Right ventricle myocardium superior (tissue), 1 donor: ENCODE measurements at regions of chr17 and their contacts with region 1.

Region 1: DNA sequence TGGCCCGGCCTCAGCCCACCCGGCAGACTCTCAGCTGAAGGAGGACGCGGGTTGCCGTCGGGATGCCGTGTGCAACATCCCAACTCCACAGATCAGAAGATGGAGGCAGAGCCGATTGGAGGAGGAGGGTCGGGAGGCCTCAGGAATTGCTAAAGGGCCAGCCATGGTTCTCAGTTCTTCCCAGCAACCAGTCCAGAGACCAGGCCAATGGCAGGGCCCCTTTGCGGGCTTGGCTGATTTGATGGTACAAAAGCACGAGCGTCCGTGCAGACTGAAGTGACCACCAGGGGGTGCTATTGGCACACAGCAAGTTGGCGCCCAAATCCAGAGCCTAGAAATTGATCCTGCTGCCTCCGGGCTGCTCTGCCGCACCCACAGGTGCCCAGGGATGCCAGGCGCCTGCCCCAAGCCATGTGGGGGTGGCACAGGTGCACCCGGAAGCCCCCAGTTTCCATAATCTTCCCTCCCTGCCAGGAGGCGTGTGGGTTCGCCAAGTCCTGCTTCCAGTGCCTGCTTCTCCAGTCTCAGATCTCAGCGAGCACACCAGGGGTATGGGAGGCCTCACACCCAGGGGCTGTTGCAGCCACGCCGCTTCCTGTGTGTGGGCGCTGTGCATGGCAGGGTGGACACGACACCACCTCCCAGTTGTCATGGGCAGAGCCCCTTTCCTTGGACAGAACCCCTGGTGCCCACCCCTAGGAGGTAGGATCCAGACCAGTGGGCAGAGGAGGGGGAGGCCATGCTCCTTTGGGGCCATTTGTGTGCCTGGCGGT is 7.1 kb upstream of the TEX19 start:
- DNase-seq: peak; percentile 89
- ATAC-seq: peak; percentile 90

Region 2: DNA sequence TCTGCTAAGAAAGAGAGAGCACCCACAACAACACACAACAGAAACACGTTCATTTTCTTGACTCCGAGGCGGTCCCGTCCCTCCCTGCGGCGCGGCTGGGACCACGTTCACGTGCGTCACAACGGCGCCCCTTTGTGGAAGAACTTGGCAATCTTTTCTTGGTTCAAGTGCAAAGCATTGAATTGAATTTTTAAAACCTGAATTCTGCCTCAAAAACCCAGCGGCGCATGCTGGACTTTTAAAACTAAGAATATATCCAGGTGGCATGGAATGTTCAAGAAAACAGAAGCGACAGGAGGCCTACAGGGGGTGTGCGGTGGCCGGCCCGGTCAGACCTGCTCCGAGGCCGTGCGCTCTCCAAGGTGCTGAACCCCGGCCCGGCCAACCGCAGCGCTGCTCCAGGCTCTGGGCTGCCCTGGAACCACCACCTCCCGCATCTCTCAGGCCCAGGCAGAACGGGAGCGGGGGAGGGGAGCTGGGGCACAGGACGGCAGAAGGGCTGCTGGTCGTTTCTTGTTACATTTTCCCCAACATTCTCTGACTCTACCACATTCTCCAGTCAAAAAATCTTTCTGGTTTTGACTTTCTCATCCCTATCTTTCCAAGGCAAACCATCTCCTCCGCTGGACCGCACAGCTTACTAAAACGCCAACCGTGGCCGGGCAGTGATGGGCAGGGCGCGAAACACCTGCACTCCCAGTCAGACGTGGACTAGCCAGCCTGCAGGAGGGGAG is 62.8 kb after region 1 on chr17:
- intact Hi-C with region 1: loop called (anchors 1 kb)
- DNase-seq: peak; percentile 81
- ATAC-seq: peak; percentile 78

Region 3: DNA sequence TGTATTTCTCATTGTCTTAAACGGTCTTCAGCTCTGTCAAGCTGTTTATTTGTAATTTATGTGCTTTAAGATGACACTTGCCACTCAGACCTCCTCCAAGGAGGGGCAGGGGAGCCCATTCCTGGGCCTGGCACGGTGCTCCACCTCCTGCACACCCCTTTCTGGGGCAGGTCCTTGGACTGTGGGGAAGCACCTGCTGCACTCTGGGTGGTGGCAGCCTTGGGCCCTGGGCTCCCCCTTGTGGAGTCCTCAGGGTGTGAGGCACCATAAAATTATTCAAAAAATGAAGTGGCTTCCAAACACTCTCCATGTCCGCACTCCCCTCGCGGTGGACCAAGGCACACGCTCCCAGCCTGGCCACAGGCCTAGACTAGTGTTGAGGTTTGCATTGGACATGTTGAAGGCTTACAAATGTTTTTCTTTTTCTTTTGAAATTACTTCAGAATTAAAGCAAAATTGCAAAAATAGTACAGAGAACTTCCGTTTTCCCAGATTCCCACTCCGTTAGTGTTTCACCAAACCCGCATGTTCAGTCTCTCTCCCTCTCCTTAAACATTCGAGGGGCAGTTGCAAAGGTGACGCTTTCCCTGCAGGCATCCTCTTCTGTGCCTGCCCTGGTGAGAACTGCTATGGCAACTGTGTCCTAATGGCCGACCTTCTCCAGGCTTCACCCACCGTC is 200.0 kb after region 1 on chr17:
- intact Hi-C with region 1: loop called (anchors 5 kb)
- DNase-seq: peak; percentile 84
- ATAC-seq: peak; percentile 72

Region 4: GRCh38 chr17:82775001-82775823 is 423.3 kb after region 1 on chr17:
- intact Hi-C with region 1: loop called (anchors 10 kb)
- DNase-seq: peak; percentile 83
- ATAC-seq: peak; percentile 74